Aorta (tissue), 5 donors: ENCODE measurements at regions of chr15 and their contacts with region 1.

Region 1: DNA sequence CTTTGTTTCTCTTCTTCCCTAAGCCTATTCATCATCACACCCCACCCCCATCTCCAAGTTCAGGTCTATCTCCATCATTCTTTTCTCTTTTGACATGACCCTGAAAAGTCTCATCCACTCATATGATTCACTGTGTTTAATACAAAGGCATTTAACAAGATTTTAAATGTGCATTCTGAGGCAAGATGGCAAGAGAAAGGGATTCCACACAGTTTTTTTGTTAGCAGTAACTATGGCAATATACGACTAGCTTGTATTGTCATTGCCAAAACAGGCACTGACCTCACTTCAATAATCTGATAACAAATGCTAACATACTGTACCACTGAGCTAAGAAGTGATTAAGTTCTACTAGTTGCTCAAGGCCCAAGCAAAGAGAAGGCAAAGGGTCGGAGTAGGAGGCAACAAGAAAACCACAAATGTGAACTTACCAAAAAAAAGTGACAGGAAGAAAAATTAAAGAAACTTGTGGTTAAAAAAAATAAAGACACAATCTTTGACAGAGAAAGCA is 53.2 kb downstream of the FBN1 start:
- DNase-seq: no peak
- ATAC-seq: no peak
- H3K4me3 ChIP-seq: no peak overlapping the region
- H3K27ac ChIP-seq: peak overlapping the region; percentile 83 to 96
- H3K4me1 ChIP-seq: no peaks in the 10 kb centered on the region
- H3K27me3 ChIP-seq: no peaks in the 10 kb centered on the region

Region 2: GRCh38 chr15:48559285-48559684 is 33.0 kb before region 1 on chr15:
- intact Hi-C with region 1: loop called in 1 of 2 experiments (anchors 5 kb)
- DNase-seq: peak in 1 of 2 donors; percentile 71
- ATAC-seq: peak; percentile 78
- H3K4me3 ChIP-seq: no peak overlapping the region
- H3K27ac ChIP-seq: peak overlapping the region in 1 of 2 donors; percentile 92
- H3K4me1 ChIP-seq: peaks cover 11 to 25% of the 10 kb centered on the region in 2 donors
- H3K27me3 ChIP-seq: no peaks in the 10 kb centered on the region